Prostate gland (tissue), 2 donors: ENCODE measurements at regions of chr1 and their contacts with region 1.

Region 1: DNA sequence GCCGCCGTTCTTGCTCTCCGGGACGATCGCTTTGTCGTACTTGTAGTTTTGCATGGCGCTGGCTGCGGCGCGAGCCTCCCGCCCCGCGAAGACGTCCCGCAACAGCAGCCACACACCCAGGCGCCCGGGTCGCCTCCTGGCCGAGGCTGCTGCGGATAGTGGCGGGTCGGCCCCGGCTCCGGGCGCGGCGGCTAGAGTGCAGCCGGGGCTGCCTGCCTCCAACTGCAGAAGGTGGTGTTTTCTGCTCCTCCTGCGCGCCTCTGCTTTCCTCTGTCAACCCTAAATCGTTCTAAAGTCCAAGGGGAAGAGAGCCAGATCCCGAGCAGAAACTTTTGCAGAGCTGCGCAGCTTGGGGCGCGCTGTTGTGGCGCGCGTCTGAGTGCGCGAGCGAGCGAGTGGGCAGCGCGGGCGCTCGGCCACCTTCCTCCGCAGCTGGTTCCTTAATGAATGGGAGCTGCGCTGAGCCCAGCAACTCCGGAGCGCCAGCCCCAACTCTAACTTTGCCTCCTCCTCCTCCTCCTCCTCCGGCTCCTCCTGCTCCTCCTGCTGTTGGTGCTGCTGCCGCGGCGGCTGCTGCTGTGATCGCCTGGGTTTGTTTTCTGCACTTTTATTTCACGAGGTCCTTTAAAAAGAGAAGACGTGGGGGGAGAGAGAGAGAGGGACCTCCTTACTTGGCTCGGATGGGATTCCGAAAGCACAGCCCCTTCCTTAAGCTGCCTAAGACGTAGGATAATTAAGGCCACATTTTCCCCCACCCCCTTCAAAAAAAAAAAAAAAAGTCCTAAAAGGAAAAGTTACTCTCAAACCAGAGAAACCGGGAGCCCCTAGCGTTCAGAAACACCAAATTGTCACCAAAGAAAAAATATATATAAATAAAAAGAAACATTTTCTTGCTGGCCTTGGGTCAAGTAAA is at the start of gene PLPP3:
- DNase-seq: peak; percentile 89
- H3K4me3 ChIP-seq: peak within 1 kb of the TSS; percentile 74 to 88
- H3K27ac ChIP-seq: peak within 1 kb of the TSS; percentile 91 to 95
- H3K4me1 ChIP-seq: no peaks in the 10 kb centered on the region
- H3K27me3 ChIP-seq: no peaks in the 10 kb centered on the region
- CTCF ChIP-seq: peak; percentile 30 to 41 (median 40)
- POLR2A ChIP-seq: peak; percentile 84
- total RNA-seq, gene PLPP3: 40.4 to 107 TPM

Region 2: DNA sequence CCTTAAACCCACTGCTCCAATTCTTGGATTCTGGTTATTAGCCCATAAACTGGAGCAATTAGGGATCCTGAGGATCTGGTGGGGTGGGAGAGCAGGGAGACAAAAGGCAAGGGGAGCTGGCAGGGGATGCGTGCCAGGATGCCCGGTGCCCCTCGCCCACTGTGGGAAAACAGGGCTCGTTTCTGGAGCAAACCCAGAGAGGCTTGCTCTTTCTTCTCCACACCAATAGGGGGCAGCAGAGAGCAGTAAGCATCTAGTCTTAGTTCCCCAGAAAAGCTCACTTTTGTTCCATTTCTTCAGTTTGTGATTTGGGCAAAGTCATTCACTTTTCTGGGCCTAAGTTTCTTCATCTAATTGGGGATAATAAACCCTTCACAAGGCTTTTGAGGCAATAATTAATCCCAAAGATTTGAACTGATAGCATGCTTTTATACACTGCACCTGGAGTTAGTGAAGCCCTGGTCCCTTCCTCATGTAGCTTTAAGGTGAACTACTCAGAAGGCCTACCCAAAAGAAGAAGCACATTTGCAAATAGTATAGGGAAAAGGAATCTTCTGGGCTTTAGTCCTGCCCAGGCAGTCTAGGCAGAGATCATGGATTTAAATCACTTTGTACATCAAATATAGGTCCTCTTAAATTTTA is 1203.5 kb before region 1 on chr1:
- intact Hi-C with region 1: loop called (anchors 2 kb)
- DNase-seq: peak; percentile 13
- H3K4me3 ChIP-seq: no peak overlapping the region
- H3K27ac ChIP-seq: peak overlapping the region; percentile 14 to 58
- H3K4me1 ChIP-seq: no peaks in the 10 kb centered on the region
- H3K27me3 ChIP-seq: no peaks in the 10 kb centered on the region
- CTCF ChIP-seq: peak; percentile 62 to 82 (median 75)
- POLR2A ChIP-seq: no peak

Region 3: DNA sequence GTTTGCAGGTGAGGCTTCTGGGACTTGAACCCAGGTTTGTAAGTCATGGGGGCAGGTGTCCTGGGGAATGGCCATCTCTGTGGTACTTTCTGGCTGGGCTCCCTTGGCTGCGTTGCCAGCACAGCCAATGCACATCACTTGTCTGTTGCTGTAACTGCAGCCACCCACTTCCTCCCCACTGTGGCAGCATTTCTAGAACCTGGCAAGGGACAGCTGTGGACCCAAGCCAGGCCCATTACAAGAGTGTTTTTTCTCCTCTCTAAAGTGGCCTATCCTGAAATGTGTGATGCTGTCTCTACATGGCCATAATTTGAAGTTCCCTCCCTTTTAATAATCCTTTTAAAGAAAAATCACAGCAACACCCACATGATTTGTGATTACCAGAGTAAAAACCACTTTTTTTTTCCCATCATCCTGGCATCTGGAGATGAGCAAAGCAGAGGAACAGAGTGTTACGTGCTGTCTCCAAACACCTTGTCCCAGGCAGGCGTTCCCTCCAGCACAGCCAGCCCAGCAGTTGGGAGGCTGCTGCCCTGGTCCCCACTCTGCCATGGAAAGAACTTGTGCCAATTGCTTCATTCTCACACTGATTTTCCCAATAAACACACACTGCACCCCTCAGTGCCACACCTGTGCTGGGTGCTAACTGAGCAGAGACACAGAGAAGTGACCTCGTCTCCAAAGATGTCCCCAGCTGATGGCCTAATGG is 1003.5 kb before region 1 on chr1:
- intact Hi-C with region 1: loop called (anchors 5 kb)
- DNase-seq: peak; percentile 27
- H3K4me3 ChIP-seq: no peak overlapping the region
- H3K27ac ChIP-seq: peak overlapping the region; percentile 56 to 65
- H3K4me1 ChIP-seq: no peaks in the 10 kb centered on the region
- H3K27me3 ChIP-seq: no peaks in the 10 kb centered on the region
- CTCF ChIP-seq: no peak
- POLR2A ChIP-seq: no peak

Region 4: DNA sequence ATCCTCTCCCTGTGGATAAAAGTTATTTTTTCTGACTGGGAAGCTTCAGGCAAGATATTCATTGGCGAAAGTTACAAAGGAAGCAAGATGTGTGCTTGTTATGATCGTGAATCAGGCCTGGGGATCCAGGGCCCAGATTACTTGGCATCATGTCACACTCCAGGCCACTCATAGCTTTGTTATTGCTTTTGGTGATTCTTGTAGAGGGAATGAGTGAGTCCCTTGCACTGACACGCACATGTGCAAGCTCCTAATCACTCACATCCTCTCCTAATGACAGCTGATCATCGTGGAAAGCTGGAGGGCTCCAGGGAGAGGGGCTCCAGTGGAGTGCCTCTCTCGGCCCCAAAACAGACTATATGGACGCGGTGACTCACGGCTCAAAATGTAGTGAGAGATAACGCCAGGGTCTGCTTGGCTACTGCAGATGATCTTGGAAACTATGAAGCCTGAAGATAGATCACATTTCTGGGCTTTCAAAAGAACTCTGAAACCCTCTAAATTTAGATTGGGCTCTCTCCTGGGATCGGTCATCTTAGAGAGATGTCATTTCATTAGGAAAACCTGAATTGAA is 883.0 kb before region 1 on chr1:
- intact Hi-C with region 1: loop called (anchors 10 kb)
- DNase-seq: no peak
- H3K4me3 ChIP-seq: no peak overlapping the region
- H3K27ac ChIP-seq: peak overlapping the region in 1 of 2 donors; percentile 10
- H3K4me1 ChIP-seq: peaks cover 4% of the 10 kb centered on the region
- H3K27me3 ChIP-seq: no peaks in the 10 kb centered on the region
- CTCF ChIP-seq: no peak
- POLR2A ChIP-seq: no peak

Region 5: DNA sequence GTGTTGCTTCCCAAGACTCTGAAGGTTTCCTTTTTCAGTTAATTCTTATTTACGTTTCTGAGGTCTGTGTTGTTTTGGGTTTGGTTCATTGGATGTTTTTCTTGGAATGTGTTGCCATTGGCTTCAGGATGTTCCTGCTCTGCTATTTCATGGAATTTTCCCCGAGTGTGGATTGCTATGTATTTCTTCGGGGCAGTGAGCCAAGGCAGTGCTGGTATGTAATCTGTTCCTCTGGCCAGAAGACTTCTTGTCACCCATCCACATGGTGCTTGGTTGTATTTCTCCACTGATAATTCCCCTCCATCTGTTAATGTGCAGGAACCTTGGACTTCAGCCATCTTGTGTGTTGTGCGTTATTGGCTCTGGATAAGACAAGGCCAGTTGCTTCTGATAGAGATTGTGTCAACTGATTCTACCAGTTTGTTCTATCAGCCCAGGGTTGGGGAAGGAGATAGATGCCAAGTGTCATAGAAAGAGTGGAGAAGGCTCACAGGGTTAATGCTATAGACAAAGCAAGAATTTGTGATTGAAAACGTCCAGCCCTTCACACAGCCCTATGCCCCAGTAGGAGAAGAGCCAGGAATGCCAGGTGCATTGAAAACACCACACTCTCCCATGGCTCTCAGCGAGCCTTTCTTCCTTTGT is 505.1 kb before region 1 on chr1:
- intact Hi-C with region 1: loop called (anchors 10 kb)
- DNase-seq: peak; percentile 8
- H3K4me3 ChIP-seq: no peak overlapping the region
- H3K27ac ChIP-seq: peak overlapping the region in 1 of 2 donors; percentile 25
- H3K4me1 ChIP-seq: no peaks in the 10 kb centered on the region
- H3K27me3 ChIP-seq: no peaks in the 10 kb centered on the region
- CTCF ChIP-seq: no peak
- POLR2A ChIP-seq: no peak

Region 6: DNA sequence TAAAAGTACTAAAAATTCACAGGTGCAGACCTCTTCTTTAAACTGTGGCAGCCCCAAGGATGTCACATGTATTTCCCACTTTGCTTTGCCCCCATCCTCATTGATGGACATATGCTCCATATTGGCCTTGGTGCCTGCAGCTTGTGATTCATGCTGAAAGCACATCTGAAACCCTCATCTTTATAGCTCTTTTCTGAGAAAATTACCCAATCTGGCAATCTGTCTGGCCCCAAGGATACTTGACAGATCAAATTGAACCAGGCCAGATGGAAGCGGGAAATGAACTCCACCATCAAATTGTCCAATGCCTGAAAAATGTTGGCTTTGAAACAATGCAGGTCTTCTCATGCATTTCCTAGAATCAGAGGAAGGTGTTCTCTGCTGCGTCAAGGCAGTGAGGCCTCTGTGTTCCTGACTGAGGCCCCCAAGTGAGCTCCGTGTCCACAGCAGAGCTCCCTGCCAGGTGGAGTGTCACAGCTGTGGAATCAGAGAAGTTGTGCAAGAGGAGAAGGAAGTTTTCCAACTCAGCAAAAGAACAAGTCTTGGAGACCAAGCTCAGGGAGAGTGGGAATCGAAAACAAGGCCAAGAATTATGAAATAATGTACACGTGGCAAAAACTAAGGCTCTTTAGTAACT is 323.6 kb before region 1 on chr1:
- intact Hi-C with region 1: loop called (anchors 5 kb)
- DNase-seq: no peak
- H3K4me3 ChIP-seq: no peak overlapping the region
- H3K27ac ChIP-seq: no peak overlapping the region
- H3K4me1 ChIP-seq: no peaks in the 10 kb centered on the region
- H3K27me3 ChIP-seq: no peaks in the 10 kb centered on the region
- CTCF ChIP-seq: no peak
- POLR2A ChIP-seq: no peak

Region 7: DNA sequence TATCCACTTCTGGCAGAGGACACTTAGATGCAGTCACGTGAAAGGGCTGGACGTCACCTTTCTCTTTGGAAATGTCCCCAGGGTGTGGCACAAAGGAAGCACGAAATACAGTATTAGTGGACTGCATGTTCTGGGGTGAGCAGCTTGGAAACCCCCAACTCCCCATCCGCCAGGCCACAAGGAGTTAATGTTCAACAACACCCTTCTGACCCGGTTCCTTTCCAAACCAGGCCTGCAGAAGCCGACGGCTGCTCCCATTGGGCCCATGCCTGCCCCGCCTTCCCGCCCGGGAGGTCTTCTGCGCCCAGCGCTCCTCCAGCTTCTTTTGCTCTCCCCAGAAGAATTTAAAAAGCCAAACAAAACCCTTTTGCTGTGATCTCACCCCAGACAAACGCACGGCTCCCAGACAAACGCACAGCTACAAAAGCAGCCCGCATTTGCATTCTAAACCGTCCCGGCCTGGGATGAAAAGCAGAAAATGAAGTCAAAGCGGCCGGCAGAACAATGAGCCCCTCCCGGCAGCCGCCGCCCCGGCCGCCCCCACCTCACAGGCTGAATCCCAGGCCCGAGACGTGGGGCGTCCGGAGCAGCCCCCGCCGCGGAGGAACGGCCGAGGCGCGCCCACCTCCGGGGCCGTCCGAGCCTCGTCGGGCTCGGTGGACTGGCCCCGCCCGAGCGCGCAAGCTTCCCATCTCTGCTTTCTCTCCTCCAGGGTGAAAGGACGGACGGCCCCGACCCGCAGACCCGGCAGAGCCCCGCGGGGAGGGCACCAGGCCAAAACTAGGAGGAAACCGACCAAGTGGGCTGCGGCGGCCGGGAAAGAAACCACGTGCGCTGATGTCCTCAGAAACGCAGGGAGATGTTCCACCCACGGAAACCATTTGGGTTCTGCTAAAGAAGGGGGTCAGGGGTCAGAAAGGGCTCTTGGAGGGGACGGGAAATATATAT is 101.8 kb before region 1 on chr1:
- intact Hi-C with region 1: loop called (anchors 10 kb)
- DNase-seq: no peak
- H3K4me3 ChIP-seq: peak overlapping the region; percentile 54 to 57
- H3K27ac ChIP-seq: peak overlapping the region; percentile 78 to 84
- H3K4me1 ChIP-seq: no peaks in the 10 kb centered on the region
- H3K27me3 ChIP-seq: no peaks in the 10 kb centered on the region
- CTCF ChIP-seq: no peak
- POLR2A ChIP-seq: no peak